Activated CD8-positive, alpha-beta T cell treated with anti-CD3 and anti-CD28 coated beads, Interleukin-2, amount 10 ng/mL, durations not matched to agents 7 days and 5 days (primary cell): ENCODE measurements at regions of chr2 and their contacts with region 1.

Region 1: DNA sequence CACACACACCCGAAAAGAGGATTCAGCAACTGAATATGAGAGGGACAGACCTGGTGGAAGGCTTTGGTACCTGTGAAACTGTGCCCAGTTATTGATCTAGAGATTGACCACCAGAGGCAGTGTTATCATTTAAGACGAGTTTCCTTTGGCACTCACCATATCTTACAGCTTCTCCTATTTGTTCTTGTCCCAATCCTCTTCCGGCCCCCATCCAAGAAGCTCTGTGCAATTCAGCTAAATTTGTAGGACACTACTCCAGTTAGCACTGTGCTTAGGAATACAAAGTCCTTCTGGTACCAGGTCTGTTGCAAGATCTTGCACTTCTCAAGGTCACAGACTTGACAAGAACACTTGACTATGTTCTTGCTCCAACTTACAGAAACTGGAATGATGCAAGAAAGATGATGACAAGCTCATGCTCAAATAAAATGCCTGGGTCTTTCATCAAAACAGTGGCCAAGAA is 177.7 kb downstream of the TMEM247 start:
- DNase-seq: peak; percentile 24
- ATAC-seq: peak; percentile 77
- H3K4me3 Mint-ChIP-seq: no peak overlapping the region
- H3K27ac Mint-ChIP-seq: no peak overlapping the region
- H3K4me1 Mint-ChIP-seq: no peaks in the 10 kb centered on the region
- H3K27me3 Mint-ChIP-seq: peaks cover 15% of the 10 kb centered on the region

Region 2: GRCh38 chr2:46776687-46777327 is 119.7 kb after region 1 on chr2:
- CTCF ChIA-PET with region 1: interaction called, 20 read pairs
- POLR2A ChIA-PET with region 1: no interaction called
- DNase-seq: peak; percentile 76
- ATAC-seq: peak; percentile 57
- H3K4me3 Mint-ChIP-seq: no peak overlapping the region
- H3K27ac Mint-ChIP-seq: no peak overlapping the region
- H3K4me1 Mint-ChIP-seq: no peaks in the 10 kb centered on the region
- H3K27me3 Mint-ChIP-seq: peaks cover 3% of the 10 kb centered on the region